HepG2 (cell line): ENCODE measurements at regions of chr5 and their contacts with region 1.

Region 1: GRCh38 chr5:35182541-35183535 is 47.4 kb downstream of the PRLR start:
- DNase-seq: peak; percentile 65
- ATAC-seq: peak; percentile 74
- H3K4me3 ChIP-seq: no peak overlapping the region
- H3K27ac ChIP-seq: no peak overlapping the region
- H3K4me1 ChIP-seq: peaks cover 34% of the 10 kb centered on the region
- H3K27me3 ChIP-seq: no peaks in the 10 kb centered on the region
- CTCF ChIP-seq: peak; percentile 79
- EP300 ChIP-seq: no peak
- POLR2A ChIP-seq: no peak
- RAD21 ChIP-seq: peak; percentile 89

Region 2: GRCh38 chr5:35089334-35090314 is 93.2 kb before region 1 on chr5:
- CTCF ChIA-PET with region 1: interaction called, 23 read pairs
- POLR2A ChIA-PET with region 1: no interaction called
- in situ Hi-C with region 1: no loop called
- intact Hi-C with region 1: loop called (anchors 1 kb)
- DNase-seq: peak; percentile 64
- ATAC-seq: peak; percentile 85
- H3K4me3 ChIP-seq: no peak overlapping the region
- H3K27ac ChIP-seq: no peak overlapping the region
- H3K4me1 ChIP-seq: peaks cover 13% of the 10 kb centered on the region
- H3K27me3 ChIP-seq: no peaks in the 10 kb centered on the region
- CTCF ChIP-seq: peak; percentile 89
- EP300 ChIP-seq: no peak
- POLR2A ChIP-seq: no peak
- RAD21 ChIP-seq: peak; percentile 93

Region 3: DNA sequence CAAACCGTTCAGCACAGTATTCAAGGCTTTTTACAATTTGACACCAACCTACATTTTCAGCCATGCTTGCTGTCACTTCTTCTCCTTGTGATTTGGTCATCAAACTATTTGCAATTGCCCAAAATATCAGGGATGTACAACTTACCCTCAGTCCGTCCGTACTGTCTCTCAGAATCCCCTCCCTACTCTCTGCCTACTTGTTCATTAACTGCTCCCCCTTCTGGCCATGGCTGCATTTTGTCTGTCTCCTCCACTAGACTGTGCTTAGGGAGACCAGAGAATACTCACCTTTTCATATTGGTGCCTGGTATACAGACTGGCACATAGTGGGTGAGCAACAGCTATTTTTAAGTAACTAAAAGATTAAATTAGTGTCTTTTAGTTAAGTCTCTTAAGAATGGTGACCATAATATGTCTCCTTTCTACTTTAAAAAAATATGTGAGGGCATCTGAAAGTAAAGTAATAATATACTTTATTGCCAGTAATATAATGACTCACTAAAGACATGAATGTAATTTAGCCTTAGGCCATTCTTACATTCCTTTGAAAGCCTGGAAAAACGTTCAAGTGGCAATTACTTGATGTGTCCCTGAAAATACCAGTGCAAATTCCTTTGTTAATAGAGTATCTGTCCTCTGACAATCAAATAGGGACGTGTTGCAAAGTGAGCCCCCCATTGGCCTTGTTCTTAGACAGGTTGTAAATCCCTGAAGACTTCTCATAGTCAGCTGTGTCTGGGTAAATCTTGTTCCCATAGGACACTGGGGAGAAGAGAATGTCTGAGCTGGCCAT is 19.7 kb after region 1 on chr5:
- CTCF ChIA-PET with region 1: no interaction called
- POLR2A ChIA-PET with region 1: no interaction called
- in situ Hi-C with region 1: no loop called
- intact Hi-C with region 1: loop called (anchors 1 kb)
- DNase-seq: peak; percentile 70
- ATAC-seq: peak; percentile 97
- H3K4me3 ChIP-seq: no peak overlapping the region
- H3K27ac ChIP-seq: no peak overlapping the region
- H3K4me1 ChIP-seq: peaks cover 19% of the 10 kb centered on the region
- H3K27me3 ChIP-seq: no peaks in the 10 kb centered on the region
- CTCF ChIP-seq: peak; percentile 85
- EP300 ChIP-seq: no peak
- POLR2A ChIP-seq: no peak
- RAD21 ChIP-seq: peak; percentile 64; the same call in 1 of the 2 replicates

Region 4: GRCh38 chr5:35237580-35238376 is 54.9 kb after region 1 on chr5:
- CTCF ChIA-PET with region 1: no interaction called
- POLR2A ChIA-PET with region 1: no interaction called
- in situ Hi-C with region 1: no loop called
- intact Hi-C with region 1: loop called (anchors 2 kb)
- DNase-seq: peak; percentile 86
- ATAC-seq: peak; percentile 100
- H3K4me3 ChIP-seq: no peak overlapping the region
- H3K27ac ChIP-seq: peak overlapping the region; percentile 31
- H3K4me1 ChIP-seq: peaks cover 29% of the 10 kb centered on the region
- H3K27me3 ChIP-seq: no peaks in the 10 kb centered on the region
- CTCF ChIP-seq: no peak
- EP300 ChIP-seq: peak in 1 of 2 experiments; percentile 80; a peak in 2 of 4 replicates
- POLR2A ChIP-seq: no peak
- RAD21 ChIP-seq: no peak